Activated B cell treated with CpG ODN at 0.5 μM for 24 hours (primary cell): ENCODE measurements at regions of chrX and their contacts with region 1.

Region 1: GRCh38 chrX:106481341-106481740 is 130.4 kb upstream of the RADX start:
- DNase-seq: no peak
- ATAC-seq: no peak
- H3K4me3 Mint-ChIP-seq: no peak overlapping the region
- H3K27ac Mint-ChIP-seq: no peak overlapping the region
- H3K4me1 Mint-ChIP-seq: peaks cover 7% of the 10 kb centered on the region
- H3K27me3 Mint-ChIP-seq: no peaks in the 10 kb centered on the region
- CTCF ChIP-seq: peak; percentile 18

Region 2: GRCh38 chrX:106619797-106620196 is 138.5 kb after region 1 on chrX:
- CTCF ChIA-PET with region 1: interaction called, 10 read pairs
- POLR2A ChIA-PET with region 1: no interaction called
- intact Hi-C with region 1: loop called (anchors 1 kb)
- DNase-seq: no peak
- ATAC-seq: no peak
- H3K4me3 Mint-ChIP-seq: no peak overlapping the region
- H3K27ac Mint-ChIP-seq: no peak overlapping the region
- H3K4me1 Mint-ChIP-seq: no peaks in the 10 kb centered on the region
- H3K27me3 Mint-ChIP-seq: no peaks in the 10 kb centered on the region
- CTCF ChIP-seq: no peak

Region 3: DNA sequence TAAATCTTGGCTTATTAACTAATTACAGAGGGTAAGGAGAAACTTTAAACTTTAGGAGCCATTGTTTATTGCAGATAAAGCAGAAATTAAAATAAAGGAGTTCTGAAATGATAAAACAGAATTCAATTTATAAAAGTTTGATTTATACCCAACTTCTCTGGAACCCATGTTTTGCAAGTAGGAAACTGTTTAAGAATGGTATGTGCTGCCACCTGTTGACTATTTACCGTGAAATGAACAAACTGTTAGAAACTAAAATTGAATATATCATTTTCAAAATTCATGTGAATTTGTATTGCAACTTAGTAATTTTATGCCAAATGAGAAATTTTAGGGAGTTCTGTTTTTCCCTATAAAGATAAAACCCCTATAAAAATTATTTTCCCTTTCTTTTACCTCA is 310.2 kb after region 1 on chrX:
- CTCF ChIA-PET with region 1: interaction called, 3 read pairs
- POLR2A ChIA-PET with region 1: no interaction called
- intact Hi-C with region 1: loop called (anchors 1 kb)
- DNase-seq: no peak
- ATAC-seq: no peak
- H3K4me3 Mint-ChIP-seq: no peak overlapping the region
- H3K27ac Mint-ChIP-seq: no peak overlapping the region
- H3K4me1 Mint-ChIP-seq: no peaks in the 10 kb centered on the region
- H3K27me3 Mint-ChIP-seq: no peaks in the 10 kb centered on the region
- CTCF ChIP-seq: no peak